ENCODE measurements at regions of chr9 and their contacts with region 1.

Region 1: GRCh38 chr9:97696803-97697601 is at the start of gene XPA:
- DNase-seq: peak; percentile 99
- H3K4me3 Mint-ChIP-seq: peak within 1 kb of the TSS; percentile 91
- H3K27ac Mint-ChIP-seq: peak within 1 kb of the TSS; percentile 89
- H3K4me1 Mint-ChIP-seq: peaks cover 47% of the 10 kb centered on the region
- H3K27me3 Mint-ChIP-seq: no peaks in the 10 kb centered on the region
- total RNA-seq, gene XPA: 8.9 and 12.0 TPM in 2 replicates

Region 2: DNA sequence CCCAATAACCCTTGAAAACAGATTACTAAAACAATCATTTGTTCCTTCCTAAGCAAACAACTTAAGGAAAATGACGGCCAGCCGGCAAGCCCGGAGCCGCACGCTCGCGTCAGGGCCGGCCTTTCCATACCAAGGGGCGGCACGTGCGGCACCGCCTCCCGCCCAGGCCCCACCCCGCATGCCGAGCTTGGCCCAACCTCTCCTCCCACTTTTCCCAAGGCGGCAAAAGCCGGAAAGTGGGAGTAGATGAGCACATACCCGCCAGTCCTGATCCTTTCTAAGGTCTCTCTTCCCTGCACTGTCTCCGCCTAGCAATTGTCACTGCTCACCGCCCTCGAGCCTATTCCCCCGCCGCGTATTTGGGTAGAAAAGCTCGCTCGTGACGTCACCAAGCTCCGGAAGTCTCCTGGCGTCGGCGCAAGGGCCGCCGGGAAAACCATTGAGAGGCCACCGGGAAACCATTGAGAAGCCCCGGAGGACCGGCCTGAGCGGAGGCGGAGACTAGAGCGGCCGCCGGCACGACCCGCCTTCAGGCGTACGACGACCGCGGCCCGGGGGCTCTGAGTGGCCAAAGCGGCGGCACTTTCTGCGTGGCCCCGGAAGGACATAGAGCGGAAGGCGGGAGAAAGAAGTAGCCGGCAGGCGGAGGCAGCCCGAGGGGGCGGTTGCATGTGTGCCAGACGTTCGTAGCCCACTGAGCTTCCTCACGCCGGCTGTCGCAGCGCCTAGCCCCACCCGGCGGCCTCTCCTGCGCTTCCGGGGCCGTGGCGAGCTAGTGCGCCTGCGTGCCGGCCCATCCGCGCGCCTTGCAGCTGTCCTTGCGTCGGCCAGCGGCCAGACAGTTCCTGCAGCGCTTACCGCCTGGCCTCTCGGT is 63.8 kb before region 1 on chr9 and contains the starts of genes NCBP1 and TSTD2:
- intact Hi-C with region 1: loop called (anchors 1 kb)
- DNase-seq: peak; percentile 99
- H3K4me3 Mint-ChIP-seq: peak within 1 kb of the TSS; percentile 95
- H3K27ac Mint-ChIP-seq: peak within 1 kb of the TSS; percentile 99
- H3K4me1 Mint-ChIP-seq: peaks cover 40% of the 10 kb centered on the region
- H3K27me3 Mint-ChIP-seq: no peaks in the 10 kb centered on the region
- total RNA-seq, gene NCBP1: 48.9 and 51.4 TPM in 2 replicates
- total RNA-seq, gene TSTD2: 17.1 and 17.7 TPM in 2 replicates

Region 3: DNA sequence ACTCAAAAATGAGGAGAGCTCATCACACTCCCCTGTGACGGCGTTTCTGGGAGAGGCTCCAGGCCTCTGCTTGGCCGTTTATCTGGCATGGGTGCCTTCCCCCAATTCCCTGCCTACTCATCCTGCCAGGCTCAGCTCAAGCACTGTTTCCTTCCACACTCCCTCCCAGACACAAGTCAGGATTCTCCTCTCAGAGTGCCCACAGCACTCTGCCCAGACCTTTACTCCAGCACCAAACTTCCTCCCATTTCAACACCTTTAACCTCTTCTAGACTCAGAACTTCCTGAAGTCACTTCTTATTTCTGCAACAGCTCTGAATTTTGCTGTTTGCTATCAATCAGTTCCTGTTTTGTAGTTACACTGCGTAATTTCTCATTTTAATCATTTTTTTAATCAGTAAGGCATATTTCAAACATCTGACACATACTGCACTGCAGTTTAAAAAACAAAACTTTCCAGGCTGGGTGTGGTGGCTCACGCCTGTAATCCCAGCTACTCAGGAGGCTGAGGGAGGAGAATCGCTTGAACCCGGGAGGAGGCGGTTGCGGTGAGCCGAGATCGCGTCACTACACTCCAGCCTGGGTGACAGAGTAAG is 209.3 kb after region 1 on chr9:
- intact Hi-C with region 1: loop called (anchors 5 kb)
- DNase-seq: peak; percentile 81
- H3K4me3 Mint-ChIP-seq: peak overlapping the region; percentile 78
- H3K27ac Mint-ChIP-seq: peak overlapping the region; percentile 93
- H3K4me1 Mint-ChIP-seq: peaks cover 66% of the 10 kb centered on the region
- H3K27me3 Mint-ChIP-seq: no peaks in the 10 kb centered on the region

Measured in activated CD4-positive, alpha-beta T cell treated with anti-CD3 and anti-CD28 coated beads, Interleukin-2, amount 10 ng/mL, durations not matched to agents 24 days and 14 days (primary cell).